ENCODE measurements at regions of chr17 and their contacts with region 1.

Region 1: DNA sequence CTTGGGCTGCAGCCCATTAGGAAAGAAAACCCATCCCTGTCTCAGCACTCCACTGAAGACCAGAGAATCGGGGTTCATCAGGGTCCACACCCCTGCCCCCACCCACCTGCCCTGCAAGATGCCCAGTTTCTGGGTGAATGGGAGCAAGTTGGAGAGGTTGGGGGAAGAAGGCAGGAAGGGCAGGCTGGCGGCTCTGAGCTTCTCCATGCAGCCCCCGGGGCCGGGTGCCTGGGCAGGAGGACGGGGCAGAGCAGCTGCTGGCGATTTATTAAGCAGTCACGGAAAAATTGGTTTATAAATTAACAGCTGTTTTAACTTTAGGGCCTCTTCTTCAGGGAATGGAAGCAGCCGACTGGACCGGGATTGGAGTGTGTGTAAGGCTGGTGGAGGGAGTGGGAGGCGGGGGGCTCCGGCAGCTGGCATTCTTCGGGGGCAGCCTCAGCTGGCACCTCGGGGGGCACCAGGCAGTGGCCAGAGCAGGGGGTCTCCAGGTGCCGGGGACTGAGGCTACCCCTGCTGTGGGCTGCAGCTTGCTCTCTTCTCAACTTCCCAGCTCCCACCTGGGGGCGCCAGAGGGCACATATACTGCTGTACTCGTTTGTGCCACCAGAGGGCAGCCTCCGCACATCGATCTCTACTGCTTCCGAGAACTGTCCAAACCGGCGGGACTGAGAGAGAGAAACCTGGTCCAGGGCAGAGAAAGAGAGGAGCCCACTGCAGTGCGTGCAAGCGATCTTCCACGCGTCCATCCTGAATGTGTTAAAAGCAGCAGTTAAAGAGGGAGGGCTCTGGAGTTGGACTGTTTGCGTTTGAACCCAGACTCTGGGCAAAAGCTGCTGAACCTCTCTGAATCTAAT is 5.0 kb upstream of the PPP1R1B start:
- H3K4me3 ChIP-seq: no peak overlapping the region
- H3K27ac ChIP-seq: no peak overlapping the region
- H3K4me1 ChIP-seq: peaks cover 4% of the 10 kb centered on the region
- CTCF ChIP-seq: peak; percentile 99

Region 2: GRCh38 chr17:39209317-39210092 is 412.2 kb before region 1 on chr17:
- CTCF ChIA-PET with region 1: interaction called, 29 read pairs
- POLR2A ChIA-PET with region 1: interaction called, 5 read pairs
- H3K4me3 ChIP-seq: peak overlapping the region; percentile 13
- H3K27ac ChIP-seq: peak overlapping the region; percentile 28; the same call in 1 of the 2 replicates
- H3K4me1 ChIP-seq: peaks cover 16% of the 10 kb centered on the region
- CTCF ChIP-seq: no peak

Region 3: DNA sequence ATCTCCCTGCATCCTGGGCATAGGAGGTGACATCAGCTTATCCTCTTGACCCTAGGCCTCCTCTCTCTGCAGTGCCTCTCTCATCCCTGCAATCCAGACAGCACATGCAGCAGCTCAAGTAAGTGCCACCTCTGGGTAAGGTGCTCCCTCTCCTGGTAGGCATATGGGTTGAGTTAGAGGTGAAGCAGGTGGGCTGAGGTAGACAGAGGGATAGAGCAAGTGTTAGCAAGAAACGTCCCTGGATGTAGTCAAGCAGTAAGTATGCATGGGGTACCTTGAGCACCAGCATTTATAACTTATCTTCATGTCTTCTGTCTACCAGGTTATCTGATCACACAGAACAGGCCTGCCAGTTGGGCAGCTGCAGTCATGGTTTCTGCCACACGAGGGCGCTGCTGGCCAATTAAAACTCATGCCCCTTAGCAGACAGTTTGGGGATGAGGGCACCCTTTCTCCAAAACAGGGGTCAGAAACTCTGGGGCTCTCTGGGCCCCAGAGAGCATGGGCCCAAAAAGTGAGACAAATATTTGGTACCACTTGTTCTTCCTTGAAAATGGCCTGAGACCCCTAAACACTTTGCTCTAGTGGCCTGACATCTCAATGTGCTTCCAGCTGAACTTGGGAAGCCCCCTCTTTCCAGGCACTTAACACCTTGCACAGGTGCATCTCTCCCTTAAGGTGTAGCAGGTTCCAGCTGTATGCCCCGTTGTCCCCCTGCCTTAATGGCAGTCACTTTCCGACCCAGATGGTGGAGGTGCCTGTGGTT is 73.9 kb before region 1 on chr17:
- CTCF ChIA-PET with region 1: interaction called, 475 read pairs
- POLR2A ChIA-PET with region 1: no interaction called
- H3K4me3 ChIP-seq: no peak overlapping the region
- H3K27ac ChIP-seq: no peak overlapping the region
- H3K4me1 ChIP-seq: no peaks in the 10 kb centered on the region
- CTCF ChIP-seq: peak; percentile 95

Region 4: GRCh38 chr17:39599004-39599664 is 22.6 kb before region 1 on chr17:
- CTCF ChIA-PET with region 1: interaction called, 10 read pairs
- POLR2A ChIA-PET with region 1: no interaction called
- H3K4me3 ChIP-seq: no peak overlapping the region
- H3K27ac ChIP-seq: no peak overlapping the region
- H3K4me1 ChIP-seq: peaks cover 4% of the 10 kb centered on the region; the same call in 1 of the 2 replicates
- CTCF ChIP-seq: no peak

Region 5: DNA sequence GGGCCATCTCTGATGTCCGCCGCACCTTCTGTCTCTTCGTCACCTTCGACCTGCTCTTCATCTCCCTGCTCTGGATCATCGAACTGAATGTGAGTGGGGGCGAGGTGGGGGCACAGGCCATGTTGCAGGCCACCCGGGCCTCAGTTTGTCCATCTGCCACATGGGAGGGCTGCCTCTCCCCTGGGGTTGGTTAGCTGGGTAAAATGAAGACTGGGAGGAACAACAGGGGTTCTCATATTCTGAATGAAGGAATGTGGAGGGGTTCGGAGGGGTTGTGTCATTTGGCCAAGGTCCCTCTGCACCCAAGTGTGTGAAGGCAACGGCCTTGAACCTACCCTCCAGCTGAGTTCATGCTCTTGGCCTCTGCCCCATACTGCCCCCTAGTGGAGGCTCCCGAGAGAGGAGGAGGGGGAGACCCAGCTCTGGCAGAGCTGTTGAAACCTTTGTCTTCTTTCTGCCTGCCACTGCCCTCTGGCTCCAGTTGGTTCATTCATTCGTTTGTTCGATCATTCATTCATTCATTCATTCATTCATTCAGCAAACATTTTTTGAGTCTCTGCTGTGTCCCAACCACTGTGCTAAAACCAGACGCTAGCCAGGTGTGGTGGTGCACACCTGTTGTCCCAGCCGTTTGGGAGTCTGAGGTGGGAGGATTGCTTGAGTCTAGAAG is 32.0 kb after region 1 on chr17:
- CTCF ChIA-PET with region 1: interaction called, 220 read pairs
- POLR2A ChIA-PET with region 1: interaction called, 3 read pairs
- H3K4me3 ChIP-seq: no peak overlapping the region
- H3K27ac ChIP-seq: no peak overlapping the region
- H3K4me1 ChIP-seq: peaks cover 2% of the 10 kb centered on the region; the same call in 1 of the 2 replicates
- CTCF ChIP-seq: peak; percentile 64

Region 6: DNA sequence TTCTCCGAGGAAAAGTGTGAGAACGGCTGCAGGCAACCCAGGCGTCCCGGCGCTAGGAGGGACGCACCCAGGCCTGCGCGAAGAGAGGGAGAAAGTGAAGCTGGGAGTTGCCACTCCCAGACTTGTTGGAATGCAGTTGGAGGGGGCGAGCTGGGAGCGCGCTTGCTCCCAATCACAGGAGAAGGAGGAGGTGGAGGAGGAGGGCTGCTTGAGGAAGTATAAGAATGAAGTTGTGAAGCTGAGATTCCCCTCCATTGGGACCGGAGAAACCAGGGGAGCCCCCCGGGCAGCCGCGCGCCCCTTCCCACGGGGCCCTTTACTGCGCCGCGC is 78.0 kb after region 1 on chr17 and contains the start of gene ERBB2:
- CTCF ChIA-PET with region 1: interaction called, 16 read pairs
- POLR2A ChIA-PET with region 1: interaction called, 4 read pairs
- H3K4me3 ChIP-seq: peak within 1 kb of the TSS; percentile 81
- H3K27ac ChIP-seq: peak within 1 kb of the TSS; percentile 68; the same call in 1 of the 2 replicates
- H3K4me1 ChIP-seq: peaks cover 13% of the 10 kb centered on the region; the same call in 1 of the 2 replicates
- CTCF ChIP-seq: no peak